ENCODE measurements at regions of chr12 and their contacts with region 1.

Region 1: DNA sequence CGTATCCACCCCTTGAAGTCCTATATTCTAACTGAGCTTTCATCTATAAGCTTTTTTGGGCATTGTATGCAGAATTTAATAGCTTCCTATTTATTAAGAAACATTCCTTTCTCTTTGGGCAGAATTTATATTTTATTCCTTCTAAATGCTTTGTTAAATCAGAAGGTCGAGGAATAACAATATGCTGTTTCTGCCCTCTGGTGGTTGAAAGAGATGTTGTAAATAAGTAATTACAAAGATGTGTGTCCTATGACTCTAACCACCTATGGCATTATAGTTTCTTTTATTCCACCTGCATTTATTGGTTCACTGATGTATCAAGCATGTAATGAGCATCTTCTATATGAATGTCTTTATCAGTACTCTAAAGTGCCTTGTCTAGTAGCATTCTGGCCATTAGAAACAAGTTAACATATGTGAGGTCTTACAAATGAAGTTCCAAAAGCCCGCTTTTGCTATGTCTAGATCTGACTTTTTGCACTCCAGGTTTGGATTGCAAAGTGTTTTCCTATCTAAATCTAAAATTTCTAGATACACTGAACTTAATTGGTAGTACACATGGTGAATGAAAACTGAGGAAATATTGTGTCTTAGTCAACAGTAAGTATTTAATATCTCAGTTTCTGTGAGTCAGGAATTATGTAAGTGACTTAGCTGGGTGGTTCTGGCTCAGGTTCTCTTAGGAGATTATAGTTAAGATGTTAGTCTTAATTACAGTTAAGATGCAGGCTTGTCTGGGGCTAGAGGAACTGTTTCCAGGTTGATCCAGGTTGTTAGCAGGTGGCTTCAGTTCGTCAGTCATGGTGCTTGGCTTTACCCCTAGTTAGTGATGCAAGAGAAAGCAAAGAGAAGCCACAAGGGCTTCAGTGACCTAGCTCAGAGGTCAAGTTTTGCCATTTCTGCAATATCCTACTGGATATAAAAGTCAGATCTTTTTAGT is 57.5 kb downstream of the PLEKHA5 start:
- DNase-seq: peak in 1 of 2 experiments; percentile 42
- H3K4me3 ChIP-seq: no peak overlapping the region
- H3K27ac ChIP-seq: no peak overlapping the region
- H3K4me1 ChIP-seq: no peaks in the 10 kb centered on the region
- H3K27me3 ChIP-seq: no peaks in the 10 kb centered on the region
- CTCF ChIP-seq: peak; percentile 83

Region 2: GRCh38 chr12:18589316-18589715 is 597.7 kb before region 1 on chr12:
- CTCF ChIA-PET with region 1: no interaction called
- POLR2A ChIA-PET with region 1: no interaction called
- intact Hi-C with region 1: loop called (anchors 10 kb)
- DNase-seq: no peak
- H3K4me3 ChIP-seq: no peak overlapping the region
- H3K27ac ChIP-seq: no peak overlapping the region
- H3K4me1 ChIP-seq: no peaks in the 10 kb centered on the region
- H3K27me3 ChIP-seq: no peaks in the 10 kb centered on the region
- CTCF ChIP-seq: peak; percentile 18; the same call in 1 of the 2 replicates

Region 3: GRCh38 chr12:18861287-18861858 is 325.6 kb before region 1 on chr12:
- CTCF ChIA-PET with region 1: interaction called, 4 read pairs
- POLR2A ChIA-PET with region 1: interaction called, 5 read pairs
- intact Hi-C with region 1: loop called (anchors 1 kb)
- DNase-seq: no peak
- H3K4me3 ChIP-seq: no peak overlapping the region
- H3K27ac ChIP-seq: no peak overlapping the region
- H3K4me1 ChIP-seq: no peaks in the 10 kb centered on the region
- H3K27me3 ChIP-seq: no peaks in the 10 kb centered on the region
- CTCF ChIP-seq: peak; percentile 82

Region 4: DNA sequence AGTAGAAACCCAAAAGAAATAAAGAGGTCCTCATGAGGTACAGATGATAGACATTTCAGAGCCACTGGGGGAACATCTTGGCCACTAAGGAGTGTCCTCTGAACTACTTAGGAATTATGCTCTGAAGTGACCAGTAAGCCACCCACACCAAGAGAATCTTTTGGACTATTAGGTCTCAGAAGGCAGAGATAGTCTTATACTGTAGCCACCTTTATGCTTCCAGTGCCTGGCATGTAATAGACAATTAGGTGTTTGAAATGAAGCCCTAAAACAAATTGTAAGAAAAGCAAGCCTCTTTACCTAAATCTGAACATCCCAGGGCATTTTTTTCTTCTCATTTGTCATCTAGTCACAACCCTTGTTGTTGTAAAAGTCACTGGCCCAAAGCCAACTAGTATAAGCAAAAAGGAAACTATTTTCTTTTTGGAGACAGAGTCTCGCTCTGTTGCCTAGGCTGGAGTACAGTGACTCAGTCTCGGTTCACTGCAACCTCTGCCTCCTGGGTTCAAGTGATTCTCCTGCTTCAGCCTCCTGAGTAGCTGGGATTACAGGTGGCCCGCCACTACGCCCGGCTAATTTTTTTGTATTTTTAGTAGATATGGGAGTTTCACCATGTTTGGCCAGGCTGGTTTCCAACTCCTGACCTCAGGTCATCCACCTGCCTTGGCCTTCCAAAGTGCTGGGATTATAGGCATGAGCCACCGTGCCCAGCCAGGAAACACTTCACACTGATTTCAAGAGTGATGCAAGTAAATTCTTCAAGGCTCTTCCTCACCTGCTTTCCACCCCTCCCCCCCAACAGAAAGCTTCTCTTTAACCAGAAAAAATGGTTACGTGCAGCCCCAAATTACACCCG is 46.4 kb before region 1 on chr12:
- CTCF ChIA-PET with region 1: no interaction called
- POLR2A ChIA-PET with region 1: interaction called, 18 read pairs
- intact Hi-C with region 1: no loop called
- DNase-seq: no peak
- H3K4me3 ChIP-seq: no peak overlapping the region
- H3K27ac ChIP-seq: no peak overlapping the region
- H3K4me1 ChIP-seq: no peaks in the 10 kb centered on the region
- H3K27me3 ChIP-seq: no peaks in the 10 kb centered on the region
- CTCF ChIP-seq: no peak

Measured in PC-9 (cell line).